Right ventricle myocardium inferior (tissue), 1 donor: ENCODE measurements at regions of chr5 and their contacts with region 1.

Region 1: GRCh38 chr5:159156426-159157238 is 52.7 kb downstream of the RNF145 start:
- DNase-seq: no peak
- ATAC-seq: peak; percentile 72

Region 2: DNA sequence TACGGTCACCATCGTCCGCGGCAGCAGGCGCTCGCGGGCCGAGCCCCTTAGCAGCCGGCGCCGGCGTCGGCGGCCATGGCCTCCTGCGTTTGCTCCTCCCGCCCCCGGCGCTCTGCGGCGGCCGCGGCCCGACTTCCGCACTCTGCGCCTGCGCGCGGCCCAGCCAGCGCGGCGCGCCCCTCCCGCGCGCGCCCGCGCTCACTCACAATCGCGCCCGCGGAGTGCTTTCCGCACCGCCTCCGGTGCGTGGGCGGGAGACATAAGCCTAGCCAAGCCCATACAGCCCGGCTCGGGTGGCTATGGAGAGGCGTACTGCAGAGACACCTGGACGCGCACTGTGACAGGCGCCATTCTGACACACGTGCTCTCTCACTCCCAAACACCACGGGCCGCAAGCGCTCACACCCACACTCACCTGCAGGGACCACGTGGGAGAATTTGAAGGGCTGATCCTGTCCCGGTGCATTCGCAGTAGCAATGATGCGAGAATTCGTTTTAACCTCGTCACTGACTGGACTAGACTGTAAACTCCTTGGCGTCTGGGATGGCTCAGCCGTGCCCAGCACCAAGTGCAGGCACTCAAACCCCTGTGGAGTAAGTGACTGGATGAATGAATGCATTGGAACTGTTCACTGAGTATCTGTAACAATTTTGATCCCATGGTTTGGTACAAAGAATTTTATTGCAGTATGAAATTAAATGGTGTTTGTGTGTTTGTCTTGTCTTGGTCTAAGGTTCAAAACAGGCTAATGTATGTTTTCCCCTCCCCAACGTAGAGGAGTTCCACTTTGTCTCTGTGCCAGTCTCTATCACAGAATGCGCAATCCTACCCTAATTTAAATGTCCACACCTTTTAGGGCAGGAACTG is 53.0 kb after region 1 on chr5 and contains the start of gene RNF145:
- intact Hi-C with region 1: loop called (anchors 5 kb)
- DNase-seq: peak; percentile 95
- ATAC-seq: peak; percentile 82
- total RNA-seq, gene RNF145: 21.9 TPM

Region 3: DNA sequence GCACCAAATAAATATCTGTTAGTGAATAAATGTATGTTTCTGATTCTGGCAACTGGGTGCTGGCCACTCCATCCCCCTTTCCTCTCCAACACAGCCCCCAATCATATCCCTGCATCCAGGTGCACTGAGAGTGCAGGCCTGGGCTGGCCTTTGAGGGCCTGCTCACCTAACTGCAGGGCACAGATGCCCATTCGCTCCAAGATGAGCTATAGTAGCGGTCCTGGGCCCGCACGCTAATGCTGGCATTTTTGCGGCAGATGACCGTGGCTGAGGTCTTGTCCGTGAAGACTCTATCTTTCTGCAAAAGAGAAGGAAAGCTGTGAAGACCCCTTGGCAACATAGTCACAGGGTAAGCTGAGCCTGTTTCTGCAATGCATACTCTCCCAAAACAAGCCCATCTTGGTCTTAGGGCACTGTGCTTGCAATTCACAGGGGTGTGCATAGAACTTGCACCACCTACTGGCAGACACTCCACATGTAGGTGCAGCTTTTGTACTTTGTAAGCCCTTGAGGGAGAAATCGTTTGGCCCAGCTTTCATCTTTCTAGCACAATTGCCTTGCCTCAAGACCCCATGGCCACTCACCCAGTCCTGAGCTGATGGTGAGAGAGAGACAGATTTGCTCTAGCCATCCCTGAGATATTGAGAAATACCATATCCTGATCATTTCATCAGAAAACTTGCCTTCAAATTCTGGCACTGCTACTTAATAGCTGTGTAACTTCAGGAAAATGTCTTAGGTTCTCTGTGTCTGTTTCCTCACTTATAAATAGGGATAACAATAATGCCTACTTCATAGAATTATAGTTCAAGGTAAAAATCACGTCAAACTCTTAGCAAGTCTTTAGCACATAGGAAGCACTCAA is 160.1 kb after region 1 on chr5:
- intact Hi-C with region 1: loop called (anchors 5 kb)
- DNase-seq: no peak
- ATAC-seq: no peak